GM10248 (cell line): ENCODE measurements at regions of chr4 and their contacts with region 1.

Region 1: DNA sequence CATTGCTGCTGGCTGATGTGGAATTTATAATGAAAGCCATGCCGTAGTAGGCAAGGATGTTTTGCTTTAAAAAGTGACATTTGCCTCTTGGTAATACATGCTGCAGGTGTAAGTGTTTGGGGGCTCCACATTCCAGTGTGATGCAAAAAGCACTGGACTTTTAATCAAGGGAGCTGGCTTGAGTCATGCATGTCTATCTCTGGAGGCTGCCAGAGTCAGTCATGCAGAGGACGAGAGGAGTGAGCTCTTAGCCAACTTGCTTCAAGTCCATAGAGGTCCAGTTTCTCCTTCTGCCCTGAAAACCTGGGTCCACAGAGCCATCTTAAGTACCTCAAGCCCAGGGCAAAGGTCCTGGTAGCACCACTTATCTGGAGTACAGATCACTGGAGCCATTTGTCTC is 11.6 kb upstream of the CXCL13 start:
- DNase-seq: no peak
- CTCF ChIP-seq: no peak

Region 2: GRCh38 chr4:77578145-77578544 is 15.8 kb before region 1 on chr4:
- CTCF ChIA-PET with region 1: interaction called, 10 read pairs
- POLR2A ChIA-PET with region 1: no interaction called
- DNase-seq: no peak
- CTCF ChIP-seq: no peak

Region 3: DNA sequence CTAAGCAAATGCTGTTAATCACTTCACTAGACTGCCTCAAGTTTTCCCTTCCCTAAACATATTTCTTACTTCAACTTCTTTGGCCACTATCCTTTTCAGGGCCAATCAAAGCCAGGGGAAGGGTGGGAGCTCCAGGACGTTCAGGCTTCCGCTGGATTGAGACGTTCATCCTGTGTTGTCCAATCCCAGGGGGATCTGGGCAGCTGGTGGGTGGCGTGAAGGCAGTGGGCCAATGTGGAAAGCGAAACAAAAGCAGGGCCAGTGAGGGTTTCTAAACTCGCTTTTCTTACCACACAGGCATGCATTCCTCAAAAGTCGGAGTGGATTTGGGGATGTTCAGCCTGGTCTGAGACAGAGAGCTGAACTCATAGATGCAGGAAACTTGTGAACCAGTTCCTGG is 19.3 kb after region 1 on chr4:
- CTCF ChIA-PET with region 1: interaction called, 96 read pairs
- POLR2A ChIA-PET with region 1: no interaction called
- DNase-seq: no peak
- CTCF ChIP-seq: no peak